KBM-7 (cell line): ENCODE measurements at regions of chr9 and their contacts with region 1.

Region 1: DNA sequence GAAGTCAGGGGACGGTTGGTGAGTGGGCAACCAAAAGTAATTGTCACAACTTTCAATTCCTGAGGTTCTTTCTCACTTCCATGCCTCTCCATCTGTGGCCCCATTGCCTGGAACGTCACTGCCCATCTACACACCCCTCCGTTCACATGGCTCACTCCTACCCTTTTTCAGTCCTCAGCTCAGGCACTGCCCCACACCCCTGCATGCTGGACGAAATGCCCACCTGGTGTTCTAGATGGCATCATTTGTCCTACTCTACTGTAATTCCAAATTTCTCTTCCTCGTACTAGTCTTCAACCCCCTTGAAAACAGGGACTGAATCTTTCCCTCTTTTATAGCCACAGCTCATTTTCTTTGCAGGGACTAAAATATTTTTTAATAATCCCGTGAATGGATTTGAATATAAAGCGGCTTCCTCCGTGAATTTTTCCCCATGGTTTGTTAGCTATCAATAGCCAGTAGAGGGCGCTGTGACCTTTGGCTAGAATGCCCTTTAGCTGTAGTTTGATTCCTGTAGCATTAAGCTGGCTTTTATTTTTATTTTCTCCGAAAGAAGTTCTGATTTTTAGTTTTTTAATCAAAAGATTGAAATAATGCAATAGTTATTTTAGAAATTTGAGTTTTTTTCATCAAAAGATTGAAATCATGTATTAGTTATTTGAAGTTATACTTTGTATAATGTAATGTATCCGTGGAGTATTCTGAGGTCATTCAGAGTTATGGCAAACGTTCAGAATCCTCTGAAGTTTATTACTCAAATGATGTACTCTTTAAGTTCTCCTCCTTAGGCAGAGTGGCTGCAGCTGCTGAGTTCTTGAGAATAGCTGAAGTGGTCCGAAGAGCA is 232.1 kb downstream of the SH3GL2 start:
- DNase-seq: peak; percentile 38

Region 2: GRCh38 chr9:17695482-17695881 is 115.5 kb before region 1 on chr9:
- in situ Hi-C with region 1: no loop called
- DNase-seq: no peak

Region 3: DNA sequence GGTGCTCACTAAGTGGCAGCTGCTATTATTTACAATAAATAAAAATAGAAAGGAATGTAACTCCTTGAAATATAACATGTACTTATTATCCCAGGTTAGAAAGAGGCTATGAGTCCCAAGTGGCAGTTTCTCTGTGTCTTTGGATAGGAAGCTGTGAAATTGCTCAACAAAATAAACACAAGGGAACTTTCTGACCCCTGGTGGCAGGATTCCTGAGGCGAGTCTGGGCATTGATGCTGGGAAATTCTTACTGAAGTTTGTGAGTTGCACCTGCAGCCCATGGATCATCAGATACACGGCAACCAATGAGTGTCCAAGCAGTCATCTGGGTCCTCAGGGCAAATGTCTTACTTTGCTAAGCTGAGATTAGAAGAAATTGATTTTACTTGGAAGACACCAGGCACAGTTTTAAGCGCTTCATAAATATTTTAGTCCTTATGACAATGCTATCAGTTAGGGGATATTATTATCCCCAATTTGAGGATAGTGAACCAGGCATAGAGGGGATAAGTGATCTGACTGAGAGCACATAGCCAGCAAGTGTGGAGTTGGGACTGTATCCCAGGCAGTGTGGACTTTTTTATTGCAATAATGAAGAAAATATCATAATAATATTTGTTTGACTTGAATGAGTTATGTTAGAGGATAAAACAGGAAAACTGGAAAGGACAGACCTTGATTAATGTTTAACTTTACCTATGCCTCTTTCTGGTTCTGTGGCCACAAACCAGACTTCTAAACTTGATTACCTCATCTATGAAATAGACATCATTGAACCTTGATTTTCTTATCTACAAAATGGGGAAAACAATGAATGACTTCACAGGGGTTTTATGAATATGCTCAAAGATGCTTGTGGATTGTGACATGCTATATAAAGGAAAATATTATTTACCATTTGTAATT is 397.5 kb after region 1 on chr9:
- in situ Hi-C with region 1: loop called (anchors 25 kb)
- DNase-seq: peak; percentile 16

Region 4: GRCh38 chr9:19048966-19049916 is 1238.3 kb after region 1 on chr9 and contains the start of gene RRAGA:
- in situ Hi-C with region 1: loop called (anchors 25 kb)
- DNase-seq: peak; percentile 99